ENCODE measurements at regions of chr16 and their contacts with region 1.

Region 1: GRCh38 chr16:46853713-46854443 is 22.9 kb upstream of the C16orf87 start:
- DNase-seq: peak; percentile 70
- H3K4me3 ChIP-seq: no peak overlapping the region
- H3K27ac ChIP-seq: no peak overlapping the region
- H3K4me1 ChIP-seq: peaks cover 12% of the 10 kb centered on the region
- CTCF ChIP-seq: peak; percentile 85

Region 2: GRCh38 chr16:46908540-46909372 is 54.9 kb after region 1 on chr16:
- CTCF ChIA-PET with region 1: interaction called, 4 read pairs
- POLR2A ChIA-PET with region 1: no interaction called
- intact Hi-C with region 1: loop called (anchors 1 kb)
- DNase-seq: peak; percentile 79
- H3K4me3 ChIP-seq: no peak overlapping the region
- H3K27ac ChIP-seq: no peak overlapping the region
- H3K4me1 ChIP-seq: peaks cover 8% of the 10 kb centered on the region
- CTCF ChIP-seq: peak; percentile 85

Region 3: GRCh38 chr16:46929378-46930332 is 75.8 kb after region 1 on chr16:
- CTCF ChIA-PET with region 1: no interaction called
- POLR2A ChIA-PET with region 1: interaction called, 4 read pairs
- intact Hi-C with region 1: loop called (anchors 5 kb)
- DNase-seq: peak; percentile 65
- H3K4me3 ChIP-seq: no peak overlapping the region
- H3K27ac ChIP-seq: no peak overlapping the region
- H3K4me1 ChIP-seq: peaks cover 11% of the 10 kb centered on the region
- CTCF ChIP-seq: peak; percentile 96

Region 4: GRCh38 chr16:46996391-46996790 is 142.5 kb after region 1 on chr16:
- CTCF ChIA-PET with region 1: no interaction called
- POLR2A ChIA-PET with region 1: no interaction called
- intact Hi-C with region 1: no loop called
- DNase-seq: no peak
- H3K4me3 ChIP-seq: no peak overlapping the region
- H3K27ac ChIP-seq: no peak overlapping the region
- H3K4me1 ChIP-seq: no peaks in the 10 kb centered on the region
- CTCF ChIP-seq: no peak

Region 5: DNA sequence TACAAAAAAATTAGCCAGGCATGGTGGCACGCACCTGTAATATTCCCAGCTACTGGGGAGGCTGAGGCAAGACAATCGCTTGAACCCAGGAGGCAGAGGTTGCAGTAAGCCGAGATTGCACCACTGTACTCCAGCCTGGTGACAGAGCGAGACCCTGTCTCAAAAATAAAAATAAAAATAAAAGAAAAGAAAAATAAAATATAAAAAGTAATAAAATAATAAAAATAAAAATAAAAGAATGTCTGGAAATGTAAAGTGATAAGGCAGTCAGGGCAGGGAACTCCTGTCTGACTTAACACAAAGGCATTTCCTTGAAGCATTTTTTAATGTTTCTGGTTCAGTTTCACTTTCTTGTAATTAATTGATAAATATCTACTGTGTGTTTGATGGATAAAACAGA is 154.3 kb after region 1 on chr16:
- CTCF ChIA-PET with region 1: no interaction called
- POLR2A ChIA-PET with region 1: no interaction called
- intact Hi-C with region 1: no loop called
- DNase-seq: no peak
- H3K4me3 ChIP-seq: no peak overlapping the region
- H3K27ac ChIP-seq: no peak overlapping the region
- H3K4me1 ChIP-seq: no peaks in the 10 kb centered on the region
- CTCF ChIP-seq: no peak

Region 6: GRCh38 chr16:47018223-47018891 is 164.5 kb after region 1 on chr16:
- CTCF ChIA-PET with region 1: no interaction called
- POLR2A ChIA-PET with region 1: no interaction called
- intact Hi-C with region 1: loop called (anchors 1 kb)
- DNase-seq: peak; percentile 80
- H3K4me3 ChIP-seq: no peak overlapping the region
- H3K27ac ChIP-seq: no peak overlapping the region
- H3K4me1 ChIP-seq: peaks cover 5% of the 10 kb centered on the region
- CTCF ChIP-seq: peak; percentile 75

Measured in OCI-LY7 (cell line).